ENCODE measurements at regions of chr18 and their contacts with region 1.

Region 1: DNA sequence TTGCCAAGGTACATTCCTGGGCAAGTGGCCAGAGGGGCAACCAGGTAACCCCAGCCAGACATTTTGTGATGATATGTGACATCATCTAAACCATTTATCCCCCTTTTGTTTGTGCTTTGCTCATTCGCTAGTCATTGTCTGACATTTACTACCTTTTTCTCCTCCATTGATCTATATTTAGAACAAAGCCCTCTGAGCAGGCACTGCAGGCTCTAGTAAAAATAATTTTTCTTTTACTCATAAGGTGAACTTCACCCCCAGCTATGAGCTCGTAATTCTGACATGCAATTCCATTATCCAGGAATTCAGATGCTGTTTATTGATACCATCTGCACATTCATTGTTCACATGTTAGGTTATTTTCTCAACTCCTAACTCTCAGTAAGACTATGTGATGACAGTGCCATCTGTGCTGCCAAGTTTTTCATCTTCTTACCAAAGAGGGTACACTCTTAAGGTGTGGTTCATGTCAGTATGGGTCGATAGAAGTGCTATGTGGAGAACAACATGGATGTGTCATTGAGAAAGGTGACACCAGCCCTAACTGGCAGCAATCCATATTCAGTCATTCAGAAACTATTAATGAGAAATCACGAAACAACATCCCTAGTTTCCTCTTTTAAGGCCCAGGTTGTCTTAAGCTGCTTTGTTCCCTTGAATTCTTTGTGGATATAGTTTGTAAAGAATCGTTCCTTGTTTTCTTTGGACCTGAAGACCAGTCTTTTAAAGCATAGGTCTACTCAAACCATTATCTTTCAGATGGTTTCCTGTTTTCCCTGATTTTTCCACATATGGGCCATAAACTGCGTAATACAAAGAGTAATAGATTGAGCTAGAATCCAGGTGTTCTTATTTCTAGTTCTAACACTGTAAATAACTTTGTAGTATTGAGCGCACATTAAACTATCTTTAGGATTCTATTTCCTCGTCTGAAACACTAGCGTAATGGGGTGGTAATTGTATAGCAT is 978.1 kb upstream of the CDH2 start:
- DNase-seq: peak; percentile 61 to 62
- H3K4me3 ChIP-seq: no peak overlapping the region
- H3K27ac ChIP-seq: peak overlapping the region; percentile 55
- H3K4me1 ChIP-seq: peaks cover 23% of the 10 kb centered on the region
- H3K27me3 ChIP-seq: no peaks in the 10 kb centered on the region
- CTCF ChIP-seq: no peak

Region 2: GRCh38 chr18:29164993-29165599 is 10.1 kb after region 1 on chr18:
- CTCF ChIA-PET with region 1: no interaction called
- POLR2A ChIA-PET with region 1: no interaction called
- intact Hi-C with region 1: loop called (anchors 1 kb)
- DNase-seq: peak in 1 of 2 experiments; percentile 53
- H3K4me3 ChIP-seq: no peak overlapping the region
- H3K27ac ChIP-seq: peak overlapping the region; percentile 74
- H3K4me1 ChIP-seq: peaks cover 23% of the 10 kb centered on the region; the same call in 1 of the 2 replicates
- H3K27me3 ChIP-seq: no peaks in the 10 kb centered on the region
- CTCF ChIP-seq: no peak

Region 3: GRCh38 chr18:29226201-29226600 is 71.2 kb after region 1 on chr18:
- CTCF ChIA-PET with region 1: no interaction called
- POLR2A ChIA-PET with region 1: no interaction called
- intact Hi-C with region 1: loop called (anchors 1 kb)
- DNase-seq: peak; percentile 49 to 60
- H3K4me3 ChIP-seq: no peak overlapping the region
- H3K27ac ChIP-seq: no peak overlapping the region
- H3K4me1 ChIP-seq: peaks cover 7% of the 10 kb centered on the region
- H3K27me3 ChIP-seq: no peaks in the 10 kb centered on the region
- CTCF ChIP-seq: no peak

Region 4: DNA sequence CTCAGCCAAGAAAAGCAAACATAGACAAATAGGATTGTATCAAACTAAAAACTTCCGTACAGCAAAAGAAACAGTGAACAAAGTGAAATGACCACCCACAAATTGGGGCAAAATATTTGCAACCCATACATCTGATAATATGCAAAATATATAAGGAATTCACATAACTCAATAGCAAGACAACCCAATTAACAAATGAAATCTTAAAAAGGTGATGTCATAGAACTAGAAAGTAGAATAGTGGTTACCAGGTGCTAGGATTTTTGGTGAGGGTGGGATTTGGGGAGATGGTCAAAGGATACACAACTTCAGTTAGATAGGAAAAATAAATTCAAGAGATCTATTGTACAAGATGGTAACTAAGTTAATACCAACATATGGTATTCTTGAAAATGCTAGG is 133.9 kb after region 1 on chr18:
- CTCF ChIA-PET with region 1: no interaction called
- POLR2A ChIA-PET with region 1: no interaction called
- intact Hi-C with region 1: no loop called
- DNase-seq: no peak
- H3K4me3 ChIP-seq: no peak overlapping the region
- H3K27ac ChIP-seq: no peak overlapping the region
- H3K4me1 ChIP-seq: no peaks in the 10 kb centered on the region
- H3K27me3 ChIP-seq: no peaks in the 10 kb centered on the region
- CTCF ChIP-seq: no peak

Measured in PC-9 (cell line).